ENCODE measurements at regions of chr13 and their contacts with region 1.

Region 1: GRCh38 chr13:20953245-20953931 is 50.8 kb upstream of the XPO4 start:
- DNase-seq: peak; percentile 91
- ATAC-seq: peak; percentile 92
- H3K4me3 ChIP-seq: peak overlapping the region; percentile 39 to 64 (median 43)
- H3K27ac ChIP-seq: peak overlapping the region; percentile 71
- H3K4me1 ChIP-seq: peaks cover 42% of the 10 kb centered on the region
- H3K27me3 ChIP-seq: no peaks in the 10 kb centered on the region
- CTCF ChIP-seq: no peak; the same call in 1 of the 2 replicates
- EP300 ChIP-seq: peak in 1 of 2 experiments; percentile 89; a peak in 2 of 4 replicates
- POLR2A ChIP-seq: no peak
- RAD21 ChIP-seq: no peak

Region 2: GRCh38 chr13:20049558-20050473 is 903.6 kb before region 1 on chr13:
- CTCF ChIA-PET with region 1: no interaction called
- POLR2A ChIA-PET with region 1: no interaction called
- in situ Hi-C with region 1: no loop called
- intact Hi-C with region 1: no loop called
- DNase-seq: peak; percentile 9
- ATAC-seq: no peak
- H3K4me3 ChIP-seq: no peak overlapping the region
- H3K27ac ChIP-seq: no peak overlapping the region
- H3K4me1 ChIP-seq: no peaks in the 10 kb centered on the region
- H3K27me3 ChIP-seq: no peaks in the 10 kb centered on the region
- CTCF ChIP-seq: no peak
- EP300 ChIP-seq: no peak
- POLR2A ChIP-seq: no peak
- RAD21 ChIP-seq: no peak

Region 3: GRCh38 chr13:20588529-20589110 is 364.8 kb before region 1 on chr13:
- CTCF ChIA-PET with region 1: no interaction called
- POLR2A ChIA-PET with region 1: no interaction called
- in situ Hi-C with region 1: no loop called
- intact Hi-C with region 1: no loop called
- DNase-seq: no peak
- ATAC-seq: no peak
- H3K4me3 ChIP-seq: no peak overlapping the region
- H3K27ac ChIP-seq: no peak overlapping the region
- H3K4me1 ChIP-seq: no peaks in the 10 kb centered on the region
- H3K27me3 ChIP-seq: no peaks in the 10 kb centered on the region
- CTCF ChIP-seq: no peak
- EP300 ChIP-seq: no peak
- POLR2A ChIP-seq: no peak
- RAD21 ChIP-seq: no peak

Region 4: GRCh38 chr13:21014502-21015170 is 61.2 kb after region 1 on chr13:
- CTCF ChIA-PET with region 1: no interaction called
- POLR2A ChIA-PET with region 1: interaction called, 4 read pairs
- in situ Hi-C with region 1: no loop called
- intact Hi-C with region 1: loop called (anchors 5 kb)
- DNase-seq: peak; percentile 79
- ATAC-seq: peak; percentile 87
- H3K4me3 ChIP-seq: peak overlapping the region in 2 of 3 experiments; percentile 0 to 36; a peak in 2 of 6 replicates
- H3K27ac ChIP-seq: peak overlapping the region; percentile 78
- H3K4me1 ChIP-seq: peaks cover 83% of the 10 kb centered on the region
- H3K27me3 ChIP-seq: no peaks in the 10 kb centered on the region
- CTCF ChIP-seq: no peak
- EP300 ChIP-seq: peak in 1 of 2 experiments; percentile 71; a peak in 1 of 4 replicates
- POLR2A ChIP-seq: peak in 1 of 2 experiments; percentile 38; a peak in 1 of 4 replicates
- RAD21 ChIP-seq: no peak